Activated CD4-positive, alpha-beta T cell treated with anti-CD3 and anti-CD28 coated beads for 36 hours (primary cell): ENCODE measurements at regions of chr2 and their contacts with region 1.

Region 1: DNA sequence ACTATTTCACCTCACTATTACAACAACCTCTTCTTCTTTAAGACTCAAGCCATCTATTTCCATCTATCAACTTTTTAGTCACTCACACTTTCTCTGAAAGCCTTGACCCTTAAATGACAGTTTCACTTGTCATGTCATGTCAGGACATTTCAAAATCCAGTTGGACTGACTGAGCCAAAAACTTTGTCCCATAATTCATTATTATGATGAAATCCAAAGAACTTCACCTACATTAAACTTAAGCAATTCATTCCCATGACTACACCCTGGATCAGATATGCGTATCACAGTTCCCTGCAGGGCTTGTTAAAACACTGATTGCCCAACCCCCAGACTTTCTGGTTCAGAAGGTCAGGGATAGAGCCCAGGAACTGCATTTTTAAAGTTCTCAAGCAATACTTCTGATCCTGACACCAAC is 26.5 kb downstream of the LDAH start:
- DNase-seq: no peak
- ATAC-seq: no peak
- H3K4me3 Mint-ChIP-seq: no peak overlapping the region
- H3K27ac Mint-ChIP-seq: no peak overlapping the region
- H3K4me1 Mint-ChIP-seq: peaks cover 22% of the 10 kb centered on the region
- H3K27me3 Mint-ChIP-seq: no peaks in the 10 kb centered on the region

Region 2: GRCh38 chr2:19540739-19541525 is 1255.5 kb before region 1 on chr2:
- CTCF ChIA-PET with region 1: no interaction called
- POLR2A ChIA-PET with region 1: no interaction called
- intact Hi-C with region 1: no loop called
- DNase-seq: no peak
- ATAC-seq: no peak
- H3K4me3 Mint-ChIP-seq: no peak overlapping the region
- H3K27ac Mint-ChIP-seq: no peak overlapping the region
- H3K4me1 Mint-ChIP-seq: no peaks in the 10 kb centered on the region
- H3K27me3 Mint-ChIP-seq: no peaks in the 10 kb centered on the region

Region 3: DNA sequence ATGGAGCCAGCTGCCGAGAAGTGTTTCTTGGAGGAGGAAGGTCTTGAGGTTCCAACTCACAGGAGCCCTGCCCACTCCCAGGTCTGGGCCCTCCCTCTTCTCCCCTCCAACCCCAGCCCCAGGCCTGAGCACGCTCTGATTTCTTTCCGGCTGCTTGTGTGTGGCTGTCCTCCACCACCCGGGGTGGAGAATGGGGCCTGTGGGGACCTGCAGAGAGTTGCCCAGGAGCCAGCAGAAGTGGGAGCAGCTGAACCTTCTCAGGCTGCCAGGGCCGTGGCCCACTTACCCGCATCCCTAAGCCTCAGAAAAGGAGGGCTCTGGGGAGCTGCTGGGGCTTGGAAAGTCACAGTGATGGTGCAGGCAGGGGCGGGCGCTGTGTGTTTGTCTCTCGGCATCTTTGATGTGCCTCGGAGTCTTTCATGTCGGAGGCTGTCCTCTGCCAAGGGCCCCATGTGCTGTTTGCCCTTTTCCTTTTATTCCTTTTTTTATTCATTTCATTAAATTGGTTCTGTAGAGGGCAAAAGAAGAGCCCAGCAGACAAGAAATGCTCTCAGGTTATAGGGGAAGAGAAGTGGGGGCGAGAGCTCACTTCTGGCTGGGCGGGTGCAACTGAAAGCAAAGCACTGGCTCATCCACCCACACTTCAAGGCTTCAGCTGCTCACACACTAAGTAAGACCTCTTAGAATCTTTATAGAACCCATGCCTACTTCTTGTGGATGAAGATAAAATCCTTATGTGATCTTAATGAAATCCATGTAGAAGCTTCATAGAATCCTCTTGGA is 623.9 kb before region 1 on chr2:
- CTCF ChIA-PET with region 1: no interaction called
- POLR2A ChIA-PET with region 1: no interaction called
- intact Hi-C with region 1: no loop called
- DNase-seq: no peak
- ATAC-seq: no peak
- H3K4me3 Mint-ChIP-seq: no peak overlapping the region
- H3K27ac Mint-ChIP-seq: no peak overlapping the region
- H3K4me1 Mint-ChIP-seq: no peaks in the 10 kb centered on the region
- H3K27me3 Mint-ChIP-seq: no peaks in the 10 kb centered on the region

Region 4: DNA sequence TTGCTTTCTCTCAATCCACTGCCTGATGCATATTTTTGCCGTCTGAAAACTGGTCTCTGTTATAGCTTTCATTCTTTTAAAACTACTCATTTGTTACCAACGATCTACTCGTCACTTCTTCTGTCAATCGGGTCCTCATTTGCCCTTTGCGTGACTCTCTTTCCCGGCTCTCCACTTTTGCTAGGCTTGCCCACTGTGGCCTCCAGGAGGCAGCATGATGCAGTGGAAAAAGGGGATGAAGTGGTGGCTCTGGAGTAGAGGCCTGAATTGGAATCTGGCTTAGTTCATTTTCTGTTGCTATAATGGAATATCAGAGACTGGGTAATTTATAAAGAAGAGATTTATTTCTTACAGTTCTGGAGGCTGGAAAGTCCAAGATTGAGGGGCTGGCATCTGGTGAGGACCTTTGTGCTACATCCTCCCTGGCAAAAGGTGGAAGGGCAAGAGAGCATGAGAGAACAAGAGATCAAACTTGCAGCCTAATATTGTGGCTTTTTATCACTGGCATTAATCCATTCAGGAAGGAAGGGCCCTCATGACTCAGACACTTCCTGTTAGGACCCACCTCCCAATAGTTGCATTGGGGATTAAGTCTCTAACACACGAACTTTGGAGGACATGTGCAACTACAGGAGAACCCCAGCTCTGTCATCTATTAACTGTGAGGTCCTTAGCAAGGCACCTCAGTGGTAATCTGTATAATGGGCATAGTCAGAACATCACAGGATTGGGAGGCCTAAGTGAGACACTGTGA is 114.0 kb before region 1 on chr2:
- CTCF ChIA-PET with region 1: no interaction called
- POLR2A ChIA-PET with region 1: no interaction called
- intact Hi-C with region 1: no loop called
- DNase-seq: no peak
- ATAC-seq: no peak
- H3K4me3 Mint-ChIP-seq: no peak overlapping the region
- H3K27ac Mint-ChIP-seq: no peak overlapping the region
- H3K4me1 Mint-ChIP-seq: no peaks in the 10 kb centered on the region
- H3K27me3 Mint-ChIP-seq: no peaks in the 10 kb centered on the region

Region 5: GRCh38 chr2:20781656-20782265 is 14.6 kb before region 1 on chr2:
- CTCF ChIA-PET with region 1: interaction called, 11 read pairs
- POLR2A ChIA-PET with region 1: no interaction called
- intact Hi-C with region 1: no loop called
- DNase-seq: peak; percentile 27
- ATAC-seq: peak; percentile 23
- H3K4me3 Mint-ChIP-seq: no peak overlapping the region
- H3K27ac Mint-ChIP-seq: no peak overlapping the region
- H3K4me1 Mint-ChIP-seq: no peaks in the 10 kb centered on the region
- H3K27me3 Mint-ChIP-seq: no peaks in the 10 kb centered on the region

Region 6: DNA sequence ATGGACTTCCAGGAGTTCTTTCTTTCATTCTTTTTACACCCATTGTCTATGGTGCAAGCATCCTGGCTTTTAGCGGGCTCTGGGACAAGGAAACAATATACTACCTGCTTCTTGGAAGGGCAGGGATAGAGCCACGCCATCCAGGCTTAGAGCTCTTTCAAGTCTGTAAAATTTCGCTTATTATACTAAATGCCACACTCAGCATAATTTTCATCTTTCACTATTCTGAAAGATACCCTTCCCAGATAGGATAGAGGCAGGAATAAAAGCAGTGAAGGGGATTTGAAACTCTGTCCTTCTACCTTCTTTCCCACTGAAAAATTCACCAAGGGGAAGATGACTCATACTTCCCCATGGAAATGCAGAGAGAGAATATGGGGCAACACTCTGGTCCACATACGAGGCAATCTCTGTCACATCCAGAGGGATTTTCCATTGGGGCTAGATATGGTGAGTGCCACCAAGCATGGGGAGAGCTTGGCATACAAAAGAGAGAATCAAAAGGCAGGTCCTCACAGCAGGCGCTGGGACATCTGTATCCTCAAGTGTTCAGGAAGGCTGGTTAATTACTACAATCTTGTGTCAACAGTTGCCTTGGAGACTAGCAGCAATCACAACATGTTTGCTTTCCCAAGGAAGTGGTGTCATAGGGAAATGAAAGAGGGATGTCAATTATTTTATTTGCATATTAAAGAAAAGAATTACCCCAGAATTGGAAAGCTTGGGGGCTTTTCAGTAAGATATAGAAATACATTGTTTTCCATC is 455.0 kb after region 1 on chr2:
- CTCF ChIA-PET with region 1: no interaction called
- POLR2A ChIA-PET with region 1: no interaction called
- intact Hi-C with region 1: no loop called
- DNase-seq: no peak
- ATAC-seq: no peak
- H3K4me3 Mint-ChIP-seq: no peak overlapping the region
- H3K27ac Mint-ChIP-seq: no peak overlapping the region
- H3K4me1 Mint-ChIP-seq: no peaks in the 10 kb centered on the region
- H3K27me3 Mint-ChIP-seq: no peaks in the 10 kb centered on the region